Sigmoid colon (tissue), 7 donors: ENCODE measurements at regions of chr20 and their contacts with region 1.

Region 1: GRCh38 chr20:561437-562231 is 18.0 kb upstream of the CSNK2A1 start:
- DNase-seq: peak; percentile 73
- H3K4me3 ChIP-seq: no peak overlapping the region
- H3K27ac ChIP-seq: no peak overlapping the region
- H3K4me1 ChIP-seq: no peaks in the 10 kb centered on the region
- H3K27me3 ChIP-seq: peaks cover 0 to 12% (median 0%) of the 10 kb centered on the region in 3 donors
- CTCF ChIP-seq: peak; percentile 84 to 96 (median 95)
- EP300 ChIP-seq: no peak
- POLR2A ChIP-seq: no peak

Region 2: DNA sequence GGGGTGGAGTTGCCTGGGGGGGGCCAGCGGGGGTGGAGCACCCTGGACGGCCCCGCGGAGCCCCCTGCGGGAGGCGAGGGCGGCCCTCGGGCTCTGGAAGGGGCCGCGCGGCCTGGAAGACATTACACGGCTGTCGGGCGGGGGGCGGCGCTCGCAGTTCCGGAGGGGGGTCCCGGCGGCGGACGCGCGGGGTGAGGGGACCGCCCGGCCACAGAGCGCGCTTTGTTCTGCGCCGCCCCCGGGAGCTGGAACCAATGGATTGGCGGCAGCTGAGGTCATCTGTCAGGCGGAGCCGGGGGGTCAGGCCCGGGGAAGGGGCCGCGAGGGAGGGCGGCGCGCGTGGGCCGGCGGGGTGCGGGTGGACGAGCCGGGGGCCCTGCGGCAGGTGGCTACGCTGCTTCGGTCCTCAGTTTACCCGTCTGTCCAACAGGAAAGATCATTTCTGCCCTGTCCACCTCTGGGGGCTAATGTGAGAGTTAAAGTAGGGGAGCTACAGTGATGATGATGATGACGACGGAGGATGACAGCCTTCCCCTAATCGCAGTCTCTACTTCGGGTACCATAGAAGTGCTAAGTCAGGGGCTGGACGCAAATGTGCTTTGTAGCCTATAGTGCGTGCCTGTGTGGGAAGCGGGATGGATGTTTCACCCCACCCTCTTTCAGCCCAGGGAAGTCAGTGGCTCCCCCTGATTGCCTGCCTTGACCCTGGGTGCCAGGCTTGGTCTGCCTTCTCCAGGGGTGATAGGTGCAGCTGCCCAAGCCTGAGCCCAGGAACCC is 81.0 kb after region 1 on chr20:
- intact Hi-C with region 1: loop called (anchors 2 kb)
- DNase-seq: no peak
- H3K4me3 ChIP-seq: peak overlapping the region; percentile 10 to 49 (median 41)
- H3K27ac ChIP-seq: peak overlapping the region in 2 of 4 donors; percentile 29 to 38
- H3K4me1 ChIP-seq: peaks cover 0 to 15% (median 12%) of the 10 kb centered on the region in 4 donors
- H3K27me3 ChIP-seq: peaks cover 0 to 21% (median 9%) of the 10 kb centered on the region in 3 donors
- CTCF ChIP-seq: no peak
- EP300 ChIP-seq: no peak
- POLR2A ChIP-seq: no peak

Region 3: DNA sequence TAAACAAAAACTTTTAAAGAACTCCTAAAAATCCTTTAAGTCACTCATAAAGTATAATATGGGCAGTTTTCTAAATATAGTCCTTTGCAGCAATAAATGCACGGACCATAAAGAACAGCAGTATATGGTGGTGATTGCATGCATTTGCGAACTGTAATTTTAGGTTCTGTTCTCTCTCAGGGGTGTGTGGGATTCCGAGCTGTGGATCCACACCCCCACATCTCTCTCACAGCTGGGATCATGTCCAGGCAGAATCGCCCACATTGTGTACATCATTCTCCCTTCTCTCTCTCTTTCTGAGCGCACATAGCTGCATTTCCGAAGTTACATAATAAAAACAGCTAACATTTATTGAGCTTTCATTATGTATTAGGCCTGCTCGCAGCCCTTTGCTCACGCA is 178.1 kb after region 1 on chr20:
- intact Hi-C with region 1: loop called (anchors 1 kb)
- DNase-seq: no peak
- H3K4me3 ChIP-seq: no peak overlapping the region
- H3K27ac ChIP-seq: no peak overlapping the region
- H3K4me1 ChIP-seq: no peaks in the 10 kb centered on the region
- H3K27me3 ChIP-seq: peaks cover 0 to 11% (median 0%) of the 10 kb centered on the region in 3 donors
- CTCF ChIP-seq: no peak
- EP300 ChIP-seq: no peak
- POLR2A ChIP-seq: no peak